ENCODE measurements at regions of chr12 and their contacts with region 1.

Region 1: DNA sequence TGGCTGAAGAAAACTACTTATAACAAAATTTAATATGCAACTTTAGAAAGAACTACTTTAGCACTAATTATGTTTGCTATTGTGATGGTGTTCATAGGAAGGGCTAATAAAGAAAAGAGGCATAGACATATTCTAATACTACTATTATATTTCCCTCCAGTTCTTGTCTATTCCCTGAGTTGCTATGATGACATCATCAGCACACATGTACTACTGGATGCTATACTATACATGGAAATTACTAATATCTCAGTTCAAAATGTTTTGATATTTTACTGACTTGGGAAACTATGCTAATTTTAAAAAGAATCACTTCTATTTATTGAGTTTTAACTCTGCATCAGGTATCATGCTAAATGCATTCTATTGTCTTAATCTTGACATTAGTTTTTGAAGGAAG is 101.6 kb downstream of the EPS8 start:
- DNase-seq: no peak
- ATAC-seq: no peak
- H3K4me3 ChIP-seq: peak overlapping the region in 1 of 2 experiments; percentile 43; a peak in 2 of 4 replicates
- H3K27ac ChIP-seq: peak overlapping the region; percentile 82; the same call in 1 of the 2 replicates
- H3K4me1 ChIP-seq: peaks cover 27% of the 10 kb centered on the region
- H3K27me3 ChIP-seq: no peaks in the 10 kb centered on the region
- CTCF ChIP-seq: no peak

Region 2: DNA sequence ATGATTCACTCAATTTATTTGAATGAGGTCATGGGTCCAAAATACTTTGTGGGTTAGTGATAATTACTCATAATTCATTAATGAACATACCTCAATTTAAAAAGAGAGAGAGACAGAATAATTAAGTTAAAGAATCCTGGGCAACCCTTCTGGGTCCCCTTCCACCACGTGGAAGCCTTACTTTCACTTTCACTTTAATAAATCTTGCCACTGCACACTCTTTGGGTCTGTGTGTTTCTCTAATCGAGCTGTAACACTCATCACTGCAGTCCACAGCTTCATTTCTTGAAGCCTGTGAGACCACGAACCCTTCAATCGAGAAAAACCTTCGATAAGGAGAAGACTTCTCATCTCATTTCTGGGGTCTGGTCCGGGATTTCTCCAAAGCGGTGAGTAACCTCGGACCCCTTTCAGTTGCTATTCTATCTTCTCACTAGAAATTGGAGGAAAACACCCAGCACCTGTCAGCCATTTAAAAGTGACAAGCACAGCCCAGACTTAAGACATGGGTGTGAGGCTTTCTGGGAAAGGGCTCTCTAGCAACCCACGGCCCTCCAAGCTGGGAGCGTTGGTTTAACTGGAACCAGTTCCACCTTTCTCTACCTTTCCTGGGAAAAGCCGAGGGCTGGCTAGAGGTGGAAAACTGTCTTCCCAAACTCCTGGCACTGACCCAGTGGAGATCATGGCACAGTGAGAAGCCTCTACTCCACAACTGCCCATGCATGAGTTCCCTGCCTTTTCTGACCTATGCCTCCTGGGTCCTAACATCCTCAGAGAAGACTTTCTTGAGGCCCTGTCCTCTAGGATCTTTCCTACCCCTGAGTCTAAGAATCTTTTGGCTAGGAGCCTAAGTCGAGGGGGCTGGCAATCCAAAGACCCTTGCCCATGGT is 1470.9 kb before region 1 on chr12:
- CTCF ChIA-PET with region 1: no interaction called
- POLR2A ChIA-PET with region 1: no interaction called
- in situ Hi-C with region 1: no loop called
- intact Hi-C with region 1: no loop called
- DNase-seq: no peak
- ATAC-seq: no peak
- H3K4me3 ChIP-seq: peak overlapping the region in 1 of 2 experiments; percentile 18; a peak in 1 of 4 replicates
- H3K27ac ChIP-seq: peak overlapping the region; percentile 54; the same call in 1 of the 2 replicates
- H3K4me1 ChIP-seq: no peaks in the 10 kb centered on the region
- H3K27me3 ChIP-seq: no peaks in the 10 kb centered on the region
- CTCF ChIP-seq: no peak

Region 3: DNA sequence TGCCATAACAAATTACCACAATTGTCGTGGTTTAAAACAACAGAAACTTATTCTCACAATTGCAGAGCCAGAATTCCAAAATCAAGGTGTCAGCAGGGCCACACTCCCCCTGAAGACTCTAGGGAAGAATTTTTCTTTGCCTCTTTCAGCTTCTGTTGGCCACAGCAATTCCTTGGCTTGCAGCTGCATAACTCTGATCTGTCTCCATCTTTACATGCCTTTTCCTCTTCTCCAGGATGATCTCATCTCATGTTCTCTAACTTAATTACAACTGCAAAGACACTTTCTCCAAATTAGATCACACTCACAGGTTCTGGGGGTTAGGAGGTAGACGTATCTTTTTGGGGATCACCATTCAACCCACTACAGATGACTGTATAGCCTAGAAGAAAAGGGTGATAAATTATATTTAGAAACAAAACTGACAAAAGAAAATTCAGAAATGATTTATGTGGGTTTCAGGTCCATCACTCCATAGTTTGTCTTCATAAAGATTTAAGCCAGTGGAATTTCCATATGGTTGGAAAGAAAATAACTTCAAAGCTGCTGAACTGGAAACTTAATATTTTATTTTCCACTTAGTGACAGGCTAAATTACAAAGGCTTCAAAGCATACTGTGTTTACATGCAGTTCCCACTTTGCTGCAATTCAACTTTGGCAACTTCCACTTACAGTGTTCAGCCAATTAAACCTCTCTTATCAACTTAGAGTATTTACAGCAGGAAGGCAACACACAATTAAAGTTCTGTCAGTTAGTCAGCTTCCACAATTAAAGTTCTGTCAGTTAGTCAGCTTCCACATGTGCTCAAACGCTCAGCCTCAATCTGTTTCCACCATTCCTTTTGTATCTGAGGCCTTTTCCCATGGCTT is 111.7 kb before region 1 on chr12:
- CTCF ChIA-PET with region 1: no interaction called
- POLR2A ChIA-PET with region 1: no interaction called
- in situ Hi-C with region 1: no loop called
- intact Hi-C with region 1: no loop called
- DNase-seq: no peak
- ATAC-seq: no peak
- H3K4me3 ChIP-seq: no peak overlapping the region
- H3K27ac ChIP-seq: no peak overlapping the region
- H3K4me1 ChIP-seq: no peaks in the 10 kb centered on the region; the same call in 1 of the 2 replicates
- H3K27me3 ChIP-seq: no peaks in the 10 kb centered on the region
- CTCF ChIP-seq: no peak

Region 4: DNA sequence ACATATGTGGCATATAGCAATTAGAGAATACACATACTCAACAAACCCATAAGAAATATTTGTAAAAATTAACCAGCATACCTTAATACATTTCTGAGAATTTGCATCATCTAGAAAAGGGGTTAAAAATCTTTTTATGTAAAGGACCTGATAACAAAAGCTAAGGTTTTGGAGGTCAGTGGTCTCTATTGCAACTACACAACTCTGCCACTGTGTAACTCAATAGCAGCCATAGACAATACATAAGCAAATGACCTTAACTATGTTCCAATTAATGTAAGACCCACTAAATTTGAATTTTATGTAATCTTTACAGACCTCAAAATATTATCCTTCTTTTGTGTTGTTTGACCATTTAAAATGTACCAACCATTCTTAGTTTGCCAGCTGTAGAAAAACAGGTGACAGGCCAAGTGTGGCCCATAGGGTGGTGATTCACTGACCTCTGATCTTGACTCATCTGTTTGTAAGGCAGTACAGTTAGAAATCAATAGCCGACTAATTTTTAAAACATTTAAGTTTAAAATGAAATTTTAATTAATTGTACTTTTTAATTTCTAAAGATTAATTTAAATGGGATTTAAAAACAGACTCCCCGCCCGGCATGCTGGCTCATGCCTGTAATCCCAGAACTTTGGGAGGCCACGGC is 109.0 kb after region 1 on chr12:
- CTCF ChIA-PET with region 1: no interaction called
- POLR2A ChIA-PET with region 1: interaction called, 13 read pairs
- in situ Hi-C with region 1: no loop called
- intact Hi-C with region 1: no loop called
- DNase-seq: no peak
- ATAC-seq: peak; percentile 91
- H3K4me3 ChIP-seq: no peak overlapping the region
- H3K27ac ChIP-seq: peak overlapping the region; percentile 54; the same call in 1 of the 2 replicates
- H3K4me1 ChIP-seq: peaks cover 14% of the 10 kb centered on the region; the same call in 1 of the 2 replicates
- H3K27me3 ChIP-seq: no peaks in the 10 kb centered on the region
- CTCF ChIP-seq: no peak